ENCODE measurements at regions of chr2 and their contacts with region 1.

Region 1: DNA sequence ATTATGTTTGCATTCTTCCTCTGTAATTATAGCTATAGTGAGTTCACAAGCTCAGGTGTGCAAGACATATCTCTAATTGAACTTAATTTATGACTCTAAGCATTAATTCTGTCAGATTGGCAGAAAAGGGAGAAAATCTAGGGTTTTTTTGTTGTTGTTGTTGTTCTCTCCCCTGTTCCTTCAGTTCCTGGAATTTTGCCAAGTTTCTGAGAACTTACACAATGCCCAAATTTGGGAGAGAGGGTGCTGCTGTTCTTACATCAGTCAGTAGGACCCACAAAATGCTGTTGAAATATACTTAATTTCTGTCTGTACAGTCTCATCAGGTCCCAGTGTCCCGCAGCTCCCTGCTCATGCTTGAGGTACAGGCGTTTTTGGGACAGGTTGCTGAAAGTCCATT is 221.8 kb upstream of the RBMS1 start:
- DNase-seq: peak in 1 of 35 experiments; percentile 2
- ATAC-seq: no peak
- H3K4me3 ChIP-seq: no peak overlapping the region
- H3K4me3 Mint-ChIP-seq: no peak overlapping the region
- H3K27ac ChIP-seq: no peak overlapping the region
- H3K27ac Mint-ChIP-seq: no peak overlapping the region
- H3K4me1 ChIP-seq: no peaks in the 10 kb centered on the region
- H3K4me1 Mint-ChIP-seq: no peaks in the 10 kb centered on the region
- H3K27me3 ChIP-seq: no peaks in the 10 kb centered on the region
- H3K27me3 Mint-ChIP-seq: peaks cover 3 to 7% of the 10 kb centered on the region in 2 donors

Region 2: DNA sequence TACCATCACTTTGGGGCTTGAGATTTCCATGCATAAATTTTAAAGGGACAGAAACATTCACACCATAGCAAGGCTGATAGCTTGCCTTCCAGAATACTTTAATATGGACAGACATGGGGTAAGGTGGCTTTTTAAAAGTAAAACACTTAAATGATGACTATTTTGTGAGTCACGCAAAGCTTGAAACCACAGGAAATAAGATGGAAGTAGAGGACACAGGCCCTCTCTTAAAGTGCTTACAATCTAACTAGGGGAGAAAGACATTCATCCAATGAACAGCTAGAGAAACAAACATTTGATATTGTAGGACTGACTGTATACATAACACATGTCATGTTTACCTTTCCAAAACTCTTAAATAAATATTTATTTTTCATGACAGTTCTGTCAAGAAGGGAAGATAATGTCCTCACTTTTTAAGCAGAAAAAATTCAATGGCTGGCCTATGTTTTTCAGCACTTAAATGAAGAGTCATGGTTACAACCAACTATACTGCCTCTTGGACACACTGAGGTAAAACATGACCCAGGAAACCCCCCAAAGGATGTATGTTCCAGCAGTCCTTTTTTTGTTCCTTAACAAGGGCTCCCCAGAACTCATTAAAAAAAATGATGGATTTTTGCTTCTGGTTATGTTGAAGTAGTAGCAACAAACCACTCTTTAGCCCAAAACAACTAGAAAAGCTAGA is 101.8 kb before region 1 on chr2:
- CTCF ChIA-PET with region 1: no interaction called
- POLR2A ChIA-PET with region 1: interaction called in 1 of 2 experiments, 10 read pairs
- DNase-seq: no peak
- ATAC-seq: no peak
- H3K4me3 ChIP-seq: no peak overlapping the region
- H3K4me3 Mint-ChIP-seq: no peak overlapping the region
- H3K27ac ChIP-seq: no peak overlapping the region
- H3K27ac Mint-ChIP-seq: no peak overlapping the region
- H3K4me1 ChIP-seq: peaks cover 3 to 30% of the 10 kb centered on the region in 2 experiments
- H3K4me1 Mint-ChIP-seq: peaks cover 32 to 38% (median 37%) of the 10 kb centered on the region in 3 donors
- H3K27me3 ChIP-seq: peaks cover 0 to 2% of the 10 kb centered on the region in 2 experiments
- H3K27me3 Mint-ChIP-seq: peaks cover 0 to 3% of the 10 kb centered on the region in 2 donors